Activated naive CD4-positive, alpha-beta T cell treated with anti-CD3 and anti-CD28 coated beads for 36 hours (primary cell): ENCODE measurements at regions of chr10 and their contacts with region 1.

Region 1: GRCh38 chr10:31083765-31084184 is 52.1 kb upstream of the ZNF438 start:
- DNase-seq: peak; percentile 86
- H3K4me3 Mint-ChIP-seq: no peak overlapping the region
- H3K27ac Mint-ChIP-seq: peak overlapping the region; percentile 54
- H3K4me1 Mint-ChIP-seq: peaks cover 6% of the 10 kb centered on the region
- H3K27me3 Mint-ChIP-seq: no peaks in the 10 kb centered on the region

Region 2: DNA sequence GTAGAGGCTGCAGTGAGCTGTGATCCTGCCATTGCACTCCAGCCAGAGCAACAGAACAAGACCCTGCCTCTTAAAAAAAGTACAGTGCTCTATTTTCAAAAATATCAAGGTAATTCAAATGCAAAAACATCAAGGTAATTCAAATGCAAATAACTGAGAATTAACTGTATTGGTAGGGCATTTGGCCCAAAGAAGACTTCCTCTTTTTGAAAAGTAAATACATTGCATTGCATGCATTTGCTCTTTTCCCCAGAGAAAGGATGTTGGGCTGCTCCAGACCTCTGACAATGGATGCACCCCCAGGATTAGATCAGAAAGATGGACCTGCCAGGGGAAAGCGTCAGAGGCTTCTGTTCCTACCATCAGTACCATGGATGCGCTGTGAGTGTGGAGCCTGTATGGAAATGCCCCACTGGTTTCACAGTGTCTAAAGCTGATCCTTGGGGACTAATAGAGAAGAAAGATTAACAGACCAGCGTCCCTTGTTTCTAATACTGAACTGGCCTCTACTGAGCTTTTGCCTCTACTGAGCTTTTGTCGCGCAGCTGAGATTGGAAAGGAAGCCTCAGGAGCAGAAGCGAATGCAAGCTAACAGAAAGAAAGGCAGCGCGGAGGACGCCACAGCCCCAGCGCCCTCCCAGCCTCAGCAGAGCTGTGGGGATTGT is 360.7 kb before region 1 on chr10:
- CTCF ChIA-PET with region 1: no interaction called
- intact Hi-C with region 1: loop called (anchors 1 kb)
- DNase-seq: no peak
- H3K4me3 Mint-ChIP-seq: no peak overlapping the region
- H3K27ac Mint-ChIP-seq: no peak overlapping the region
- H3K4me1 Mint-ChIP-seq: no peaks in the 10 kb centered on the region
- H3K27me3 Mint-ChIP-seq: no peaks in the 10 kb centered on the region

Region 3: GRCh38 chr10:30759423-30759822 is 324.4 kb before region 1 on chr10:
- CTCF ChIA-PET with region 1: no interaction called
- intact Hi-C with region 1: no loop called
- DNase-seq: no peak
- H3K4me3 Mint-ChIP-seq: no peak overlapping the region
- H3K27ac Mint-ChIP-seq: no peak overlapping the region
- H3K4me1 Mint-ChIP-seq: no peaks in the 10 kb centered on the region
- H3K27me3 Mint-ChIP-seq: no peaks in the 10 kb centered on the region

Region 4: GRCh38 chr10:31004611-31005193 is 79.1 kb before region 1 on chr10:
- CTCF ChIA-PET with region 1: no interaction called
- intact Hi-C with region 1: no loop called
- DNase-seq: no peak
- H3K4me3 Mint-ChIP-seq: no peak overlapping the region
- H3K27ac Mint-ChIP-seq: no peak overlapping the region
- H3K4me1 Mint-ChIP-seq: peaks cover 38% of the 10 kb centered on the region
- H3K27me3 Mint-ChIP-seq: no peaks in the 10 kb centered on the region

Region 5: DNA sequence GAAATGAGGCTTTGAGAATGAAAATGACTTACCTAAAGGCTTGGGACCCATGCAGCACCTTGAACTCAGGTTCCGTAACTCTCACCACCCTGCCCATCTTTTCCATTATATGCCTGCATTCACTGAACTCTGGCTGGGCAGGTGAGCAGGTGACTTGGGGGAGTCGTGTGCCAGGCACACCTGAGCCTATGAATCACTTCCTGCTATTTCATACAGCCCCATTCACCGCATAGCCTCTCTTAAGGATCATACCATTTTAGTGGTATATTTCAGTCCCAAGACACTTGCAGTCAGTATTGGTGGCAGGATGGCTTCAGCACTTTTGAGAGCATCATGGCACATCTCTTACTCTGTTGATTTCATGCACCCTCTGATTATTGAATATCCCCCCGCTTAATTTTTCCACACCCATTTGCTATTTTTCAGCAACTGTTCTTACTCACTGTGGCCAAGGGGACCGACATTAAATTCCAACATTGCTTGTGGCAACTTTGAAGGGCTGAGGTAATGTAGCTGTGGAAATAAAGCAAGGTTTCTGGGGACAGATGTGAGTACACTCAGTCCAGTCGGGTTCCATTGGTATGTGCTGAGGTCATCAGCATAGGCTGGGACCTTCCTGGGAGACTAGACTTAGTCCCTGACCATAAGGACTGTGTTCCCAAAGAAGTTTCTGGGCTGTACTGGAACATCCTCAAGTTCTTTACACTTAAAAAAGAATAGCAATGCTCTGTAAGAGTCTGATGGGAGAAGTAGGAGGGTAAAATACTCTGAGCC is 12.4 kb before region 1 on chr10:
- CTCF ChIA-PET with region 1: interaction called, 10 read pairs
- intact Hi-C with region 1: no loop called
- DNase-seq: no peak
- H3K4me3 Mint-ChIP-seq: no peak overlapping the region
- H3K27ac Mint-ChIP-seq: no peak overlapping the region
- H3K4me1 Mint-ChIP-seq: no peaks in the 10 kb centered on the region
- H3K27me3 Mint-ChIP-seq: peaks cover 14% of the 10 kb centered on the region

Region 6: GRCh38 chr10:31353574-31353973 is 269.8 kb after region 1 on chr10:
- CTCF ChIA-PET with region 1: no interaction called
- intact Hi-C with region 1: loop called (anchors 1 kb)
- DNase-seq: peak; percentile 40
- H3K4me3 Mint-ChIP-seq: no peak overlapping the region
- H3K27ac Mint-ChIP-seq: no peak overlapping the region
- H3K4me1 Mint-ChIP-seq: peaks cover 60% of the 10 kb centered on the region
- H3K27me3 Mint-ChIP-seq: no peaks in the 10 kb centered on the region

Region 7: DNA sequence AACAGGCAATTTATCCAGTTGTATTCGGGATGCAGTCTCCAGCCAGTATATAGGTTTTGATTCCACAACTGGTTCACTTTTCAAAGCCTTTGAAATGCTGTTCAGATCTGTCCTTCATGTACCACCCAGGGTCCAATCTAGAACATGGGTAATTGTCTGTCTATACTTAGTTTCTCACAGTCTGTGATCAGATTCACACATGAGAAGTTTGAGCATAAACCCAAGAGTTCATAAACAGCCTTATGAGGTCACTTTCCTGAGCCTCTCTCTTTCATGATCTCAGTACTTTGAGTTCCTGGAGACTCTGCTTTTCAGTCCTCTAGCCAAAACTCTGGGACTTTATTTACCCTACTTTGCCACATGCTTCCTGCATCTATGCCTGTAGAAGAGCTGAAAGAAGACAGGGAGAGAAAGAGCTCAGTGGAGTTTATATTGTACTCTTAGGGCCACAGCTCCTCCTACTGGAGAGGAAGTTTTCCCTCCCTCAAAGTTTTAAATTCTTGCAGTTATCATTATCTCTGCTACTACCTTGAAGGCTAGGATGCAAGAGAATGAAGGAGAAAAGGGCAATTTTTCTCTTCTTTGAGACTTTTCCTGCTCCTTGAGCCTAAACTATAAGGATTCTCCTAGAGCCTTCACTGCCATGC is 407.2 kb after region 1 on chr10:
- CTCF ChIA-PET with region 1: interaction called, 6 read pairs
- intact Hi-C with region 1: loop called (anchors 1 kb)
- DNase-seq: peak; percentile 27
- H3K4me3 Mint-ChIP-seq: no peak overlapping the region
- H3K27ac Mint-ChIP-seq: no peak overlapping the region
- H3K4me1 Mint-ChIP-seq: no peaks in the 10 kb centered on the region
- H3K27me3 Mint-ChIP-seq: no peaks in the 10 kb centered on the region

Region 8: DNA sequence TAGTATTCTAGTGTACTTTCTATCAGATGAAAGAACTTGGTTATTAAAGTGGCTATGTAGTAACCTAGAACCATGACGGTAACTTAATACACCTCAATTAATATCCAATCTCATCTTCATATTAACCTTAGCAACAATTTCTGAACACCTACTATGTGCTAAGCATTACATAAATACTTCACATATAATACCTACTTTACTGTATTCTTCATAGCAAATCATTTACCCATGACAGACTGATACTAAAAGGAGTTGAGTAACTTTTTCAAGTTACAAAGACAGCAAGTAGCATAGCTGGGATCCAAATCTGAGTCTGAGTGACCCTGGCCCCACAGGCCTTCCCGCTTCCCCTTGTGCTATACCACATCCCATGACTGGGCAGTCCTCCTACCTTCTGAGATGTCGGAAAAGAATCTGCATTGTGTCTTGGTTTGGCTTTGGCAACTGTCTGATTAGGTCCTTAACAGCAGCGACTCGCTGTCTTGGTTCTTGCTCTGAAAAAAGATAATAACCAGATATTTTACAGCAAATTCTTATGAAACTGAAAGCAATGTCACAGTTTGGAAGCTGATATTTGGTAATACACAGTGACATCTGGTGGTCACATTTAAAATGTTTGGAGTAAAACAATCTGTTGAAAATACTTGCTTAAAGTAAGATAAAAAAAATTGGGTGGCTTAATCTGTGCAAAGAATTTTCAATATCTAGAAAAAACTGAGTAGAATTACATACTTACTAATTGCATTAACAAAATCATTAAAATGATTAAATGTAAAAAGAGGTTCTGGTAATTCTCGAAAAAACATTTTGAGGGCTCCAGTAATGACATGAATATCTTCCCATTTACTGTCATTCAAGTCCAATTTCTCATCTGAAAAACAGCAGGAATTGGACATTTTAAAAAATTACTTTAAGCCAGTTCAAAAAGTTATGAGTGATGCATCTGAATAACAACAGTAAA is 724.8 kb after region 1 on chr10:
- CTCF ChIA-PET with region 1: interaction called, 7 read pairs
- intact Hi-C with region 1: loop called (anchors 2 kb)
- DNase-seq: peak; percentile 24
- H3K4me3 Mint-ChIP-seq: peak overlapping the region; percentile 57
- H3K27ac Mint-ChIP-seq: peak overlapping the region; percentile 77
- H3K4me1 Mint-ChIP-seq: peaks cover 6% of the 10 kb centered on the region
- H3K27me3 Mint-ChIP-seq: no peaks in the 10 kb centered on the region